ENCODE measurements at regions of chr10 and their contacts with region 1.

Region 1: DNA sequence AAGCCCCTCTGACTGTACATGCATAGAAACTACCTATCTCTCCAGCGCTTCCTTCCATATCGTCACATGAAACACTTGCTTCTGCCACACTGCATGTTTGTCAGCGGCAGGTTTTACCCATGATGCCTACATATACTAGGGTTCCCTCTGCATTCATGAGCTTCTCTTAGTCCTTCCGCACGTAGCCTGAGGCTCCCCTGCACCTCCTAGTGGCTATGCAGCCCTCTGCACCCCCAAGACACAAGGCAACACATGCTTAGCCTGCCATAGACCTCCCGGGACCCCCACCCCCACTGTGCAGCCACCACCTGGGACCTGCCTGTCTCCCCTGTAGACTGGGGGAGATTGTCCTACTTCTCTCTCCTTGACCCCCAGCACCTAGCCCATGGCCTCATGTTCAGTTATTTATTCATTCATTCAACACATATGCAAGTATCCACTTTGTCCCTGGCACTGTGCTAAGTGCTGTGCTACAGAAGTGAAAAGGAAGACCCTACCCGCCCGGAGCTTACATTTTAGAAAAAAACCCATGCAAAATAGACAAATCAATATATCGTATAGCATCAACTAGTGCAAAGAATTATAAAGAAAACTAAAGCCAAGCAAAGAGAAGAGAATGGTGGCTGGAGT is 23.5 kb downstream of the TMEM273 start:
- DNase-seq: peak; percentile 31
- H3K4me3 ChIP-seq: no peak overlapping the region
- H3K27ac ChIP-seq: no peak overlapping the region
- H3K4me1 ChIP-seq: no peaks in the 10 kb centered on the region
- H3K27me3 ChIP-seq: no peaks in the 10 kb centered on the region
- CTCF ChIP-seq: peak; percentile 57

Region 2: GRCh38 chr10:48885383-48885782 is 279.3 kb before region 1 on chr10:
- intact Hi-C with region 1: loop called (anchors 5 kb)
- DNase-seq: no peak
- H3K4me3 ChIP-seq: no peak overlapping the region
- H3K27ac ChIP-seq: no peak overlapping the region
- H3K4me1 ChIP-seq: no peaks in the 10 kb centered on the region
- H3K27me3 ChIP-seq: no peaks in the 10 kb centered on the region
- CTCF ChIP-seq: peak; percentile 25

Region 3: GRCh38 chr10:48981310-48981907 is 183.3 kb before region 1 on chr10:
- intact Hi-C with region 1: loop called (anchors 5 kb)
- DNase-seq: peak; percentile 51
- H3K4me3 ChIP-seq: no peak overlapping the region
- H3K27ac ChIP-seq: no peak overlapping the region
- H3K4me1 ChIP-seq: no peaks in the 10 kb centered on the region
- H3K27me3 ChIP-seq: no peaks in the 10 kb centered on the region
- CTCF ChIP-seq: peak; percentile 74

Region 4: GRCh38 chr10:49053053-49053997 is 111.3 kb before region 1 on chr10:
- intact Hi-C with region 1: no loop called
- DNase-seq: no peak
- H3K4me3 ChIP-seq: no peak overlapping the region
- H3K27ac ChIP-seq: no peak overlapping the region
- H3K4me1 ChIP-seq: no peaks in the 10 kb centered on the region
- H3K27me3 ChIP-seq: no peaks in the 10 kb centered on the region
- CTCF ChIP-seq: no peak

Measured in colonic mucosa (tissue), 4 donors.